PC-9 (cell line): ENCODE measurements at regions of chr12 and their contacts with region 1.

Region 1: DNA sequence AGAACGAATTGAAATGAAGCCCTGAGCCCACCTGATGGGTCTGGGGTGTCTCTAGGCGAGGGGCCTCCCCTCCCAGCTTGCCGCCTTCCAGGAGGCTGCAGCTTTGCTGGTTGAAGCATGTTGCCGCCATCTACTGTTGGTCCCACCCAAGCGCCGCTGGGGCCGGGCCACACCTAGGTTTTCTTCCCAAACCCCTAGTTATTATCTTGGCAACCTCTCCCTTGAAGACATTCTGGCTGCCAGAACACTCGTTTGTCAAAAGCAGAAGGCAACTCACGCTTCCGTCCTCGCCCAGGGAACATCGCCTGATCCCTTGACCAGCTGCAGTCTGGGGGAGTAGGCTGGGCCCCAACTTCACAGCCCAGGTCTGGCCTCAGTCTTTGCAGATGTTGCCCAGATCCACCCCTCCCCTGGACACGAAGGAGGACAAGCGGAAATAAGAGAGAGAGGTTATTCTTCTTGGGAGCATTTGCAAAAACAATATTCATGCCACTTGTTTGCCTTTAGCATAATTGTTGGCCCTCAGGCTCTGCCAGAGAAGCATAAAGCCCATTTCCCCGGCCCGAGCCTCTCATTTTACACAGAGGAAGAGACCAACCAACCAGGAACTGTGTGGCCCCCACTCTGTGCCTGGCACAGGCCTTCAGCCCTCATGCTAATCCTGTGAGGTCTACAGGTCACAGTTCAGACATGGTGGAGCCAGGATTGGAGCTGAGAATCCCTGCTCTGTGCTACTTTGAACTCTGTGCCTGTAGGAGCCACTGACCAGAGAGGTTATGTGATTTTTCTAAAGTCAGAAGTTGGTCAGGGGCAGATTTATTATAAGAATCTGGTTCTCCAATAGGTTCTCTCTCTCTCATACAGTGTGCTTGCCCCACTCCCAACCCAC is 6.8 kb downstream of the EMP1 start:
- DNase-seq: peak in 1 of 2 experiments; percentile 83
- H3K4me3 ChIP-seq: peak overlapping the region; percentile 32; the same call in 1 of the 2 replicates
- H3K27ac ChIP-seq: peak overlapping the region; percentile 99
- H3K4me1 ChIP-seq: peaks cover 97% of the 10 kb centered on the region
- H3K27me3 ChIP-seq: no peaks in the 10 kb centered on the region
- CTCF ChIP-seq: no peak

Region 2: DNA sequence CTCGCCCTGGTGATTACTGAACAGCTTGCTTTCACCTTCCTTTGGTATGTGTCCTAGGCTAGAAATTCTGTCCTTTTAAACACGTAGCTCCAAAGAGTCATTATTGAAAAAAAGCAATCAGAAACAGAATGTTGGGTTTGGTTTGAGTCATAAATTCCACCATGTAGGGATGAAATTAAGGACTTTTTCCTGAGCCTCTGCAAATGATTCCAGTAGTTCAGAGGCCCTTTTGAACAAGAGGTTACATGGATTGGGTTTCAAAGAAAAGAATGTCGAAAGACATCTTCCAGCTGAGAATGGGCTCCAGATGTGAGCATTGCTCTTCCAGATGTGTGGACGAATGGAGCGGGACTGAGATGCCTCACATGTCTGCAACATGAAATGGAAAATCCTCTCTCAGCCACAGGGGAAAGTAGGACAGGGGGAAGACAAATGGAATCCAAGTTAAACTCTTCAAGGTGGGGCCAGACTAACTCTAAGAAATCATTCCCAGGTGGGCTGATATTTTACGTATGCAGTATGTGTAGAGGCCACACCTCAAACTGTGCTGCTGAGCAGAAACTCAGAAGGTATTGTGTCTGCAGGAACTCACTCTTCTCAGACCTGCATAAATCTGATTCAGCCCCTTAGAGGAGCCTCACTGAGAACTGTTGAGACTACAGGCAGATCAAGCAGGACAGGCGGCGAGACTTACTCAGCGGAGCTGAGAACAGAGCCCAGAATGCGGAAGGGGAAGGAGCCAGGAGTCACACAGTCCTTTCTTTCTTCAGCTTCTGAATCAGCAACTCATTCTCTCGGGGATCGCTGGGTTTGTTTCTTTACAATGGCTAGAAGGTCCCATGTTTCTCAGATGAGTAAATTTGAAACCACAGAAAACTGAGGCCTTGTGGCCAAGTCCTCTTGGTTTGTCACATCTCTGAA is 30.0 kb before region 1 on chr12:
- CTCF ChIA-PET with region 1: interaction called, 4 read pairs
- POLR2A ChIA-PET with region 1: interaction called, 19 read pairs
- intact Hi-C with region 1: loop called (anchors 1 kb)
- DNase-seq: peak; percentile 93 to 97
- H3K4me3 ChIP-seq: peak overlapping the region; percentile 37; the same call in 1 of the 2 replicates
- H3K27ac ChIP-seq: peak overlapping the region; percentile 99
- H3K4me1 ChIP-seq: peaks cover 100% of the 10 kb centered on the region
- H3K27me3 ChIP-seq: no peaks in the 10 kb centered on the region
- CTCF ChIP-seq: no peak

Region 3: DNA sequence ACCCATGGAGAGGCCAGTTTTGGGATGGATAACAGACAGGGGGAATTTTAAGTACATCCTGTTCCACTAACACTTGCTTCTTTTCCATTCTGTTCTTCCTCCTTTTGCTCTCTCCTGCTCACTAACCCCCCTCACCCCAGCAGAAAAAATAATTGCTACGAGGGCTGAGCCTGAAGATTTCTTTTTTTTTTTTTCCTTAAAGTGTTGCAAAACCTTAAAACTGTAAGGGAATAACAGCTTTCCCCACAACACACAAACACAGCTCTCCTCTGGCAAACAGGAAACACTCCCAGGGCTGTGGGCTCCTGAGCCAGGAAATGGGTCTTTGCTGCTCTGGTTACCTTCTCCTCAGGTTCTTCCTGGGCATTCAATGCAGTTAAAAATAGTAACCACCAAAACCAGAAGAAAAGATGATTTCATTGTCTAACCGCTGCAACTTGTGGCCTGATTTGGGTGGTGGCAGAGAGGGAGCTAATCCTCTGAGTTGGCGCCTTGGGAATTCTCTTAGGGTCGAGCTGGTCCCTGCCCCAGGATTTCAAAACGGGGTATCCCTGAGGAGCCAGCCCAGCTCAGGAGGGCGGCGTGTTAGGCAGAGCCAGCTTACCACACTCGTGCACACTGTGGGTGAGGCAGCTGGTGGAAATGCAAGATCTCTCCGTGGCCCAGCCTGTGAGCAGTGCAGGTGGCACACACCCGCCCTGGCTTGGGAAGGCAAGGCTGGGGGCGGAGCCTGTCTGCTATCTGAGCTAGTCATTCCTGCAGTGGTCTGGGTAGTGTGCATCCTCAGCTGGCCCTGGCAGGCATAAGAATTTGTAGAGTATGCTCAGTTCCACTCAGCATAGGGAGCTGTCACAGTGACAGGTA is 23.8 kb before region 1 on chr12:
- CTCF ChIA-PET with region 1: interaction called, 12 read pairs
- POLR2A ChIA-PET with region 1: interaction called, 15 read pairs
- intact Hi-C with region 1: loop called (anchors 1 kb)
- DNase-seq: peak; percentile 94 to 95
- H3K4me3 ChIP-seq: peak overlapping the region; percentile 39; the same call in 1 of the 2 replicates
- H3K27ac ChIP-seq: peak overlapping the region; percentile 95
- H3K4me1 ChIP-seq: peaks cover 89% of the 10 kb centered on the region
- H3K27me3 ChIP-seq: no peaks in the 10 kb centered on the region
- CTCF ChIP-seq: no peak

Region 4: GRCh38 chr12:13233830-13234641 is 30.8 kb after region 1 on chr12:
- CTCF ChIA-PET with region 1: no interaction called
- POLR2A ChIA-PET with region 1: no interaction called
- intact Hi-C with region 1: loop called (anchors 2 kb)
- DNase-seq: peak in 1 of 2 experiments; percentile 62
- H3K4me3 ChIP-seq: no peak overlapping the region
- H3K27ac ChIP-seq: no peak overlapping the region
- H3K4me1 ChIP-seq: peaks cover 8% of the 10 kb centered on the region; the same call in 1 of the 2 replicates
- H3K27me3 ChIP-seq: no peaks in the 10 kb centered on the region
- CTCF ChIP-seq: peak; percentile 96

Region 5: DNA sequence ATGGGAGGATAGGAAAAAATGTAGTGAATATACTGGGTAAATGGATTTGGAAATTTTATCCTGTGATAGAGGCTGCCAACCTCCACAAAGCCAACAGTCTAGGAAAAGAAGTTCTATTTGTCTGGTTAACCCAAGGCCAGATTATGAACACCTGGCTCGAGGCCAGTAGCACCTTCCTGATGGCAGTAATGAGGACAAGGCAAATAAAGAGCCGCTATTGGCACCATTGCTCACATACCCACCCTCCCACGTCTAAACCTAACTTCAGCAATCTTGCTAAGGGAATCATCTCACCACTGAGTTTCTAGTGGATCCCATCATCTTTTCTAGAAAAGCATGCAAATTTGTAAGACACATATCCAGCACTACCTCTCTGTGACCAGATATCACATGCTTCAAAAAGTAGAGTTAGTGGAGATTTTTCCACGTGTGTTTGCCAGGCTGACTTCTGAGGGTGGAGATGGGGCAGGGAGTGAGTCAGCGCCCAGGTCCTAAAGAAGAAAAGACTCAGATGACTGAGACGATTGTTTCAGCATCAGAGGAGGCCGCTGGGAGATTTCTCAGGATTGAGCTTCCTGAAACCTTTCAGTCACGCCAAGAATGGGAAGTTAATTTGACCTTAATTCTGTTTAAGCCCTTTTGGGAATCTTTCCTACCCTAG is 356.2 kb after region 1 on chr12:
- CTCF ChIA-PET with region 1: no interaction called
- POLR2A ChIA-PET with region 1: interaction called, 17 read pairs
- intact Hi-C with region 1: no loop called
- DNase-seq: no peak
- H3K4me3 ChIP-seq: no peak overlapping the region
- H3K27ac ChIP-seq: no peak overlapping the region
- H3K4me1 ChIP-seq: no peaks in the 10 kb centered on the region
- H3K27me3 ChIP-seq: no peaks in the 10 kb centered on the region
- CTCF ChIP-seq: no peak

Region 6: GRCh38 chr12:13573698-13574321 is 370.5 kb after region 1 on chr12:
- CTCF ChIA-PET with region 1: no interaction called
- POLR2A ChIA-PET with region 1: no interaction called
- intact Hi-C with region 1: no loop called
- DNase-seq: peak in 1 of 2 experiments; percentile 79
- H3K4me3 ChIP-seq: no peak overlapping the region
- H3K27ac ChIP-seq: peak overlapping the region; percentile 40
- H3K4me1 ChIP-seq: peaks cover 26% of the 10 kb centered on the region
- H3K27me3 ChIP-seq: no peaks in the 10 kb centered on the region
- CTCF ChIP-seq: no peak

Region 7: GRCh38 chr12:14920475-14921126 is 1717.3 kb after region 1 on chr12:
- CTCF ChIA-PET with region 1: no interaction called
- POLR2A ChIA-PET with region 1: interaction called, 10 read pairs
- intact Hi-C with region 1: no loop called
- DNase-seq: no peak
- H3K4me3 ChIP-seq: no peak overlapping the region
- H3K27ac ChIP-seq: no peak overlapping the region
- H3K4me1 ChIP-seq: no peaks in the 10 kb centered on the region
- H3K27me3 ChIP-seq: no peaks in the 10 kb centered on the region
- CTCF ChIP-seq: no peak